ENCODE measurements at regions of chr4 and their contacts with region 1.

Region 1: GRCh38 chr4:6716018-6716911 is at the start of gene BLOC1S4:
- DNase-seq: peak; percentile 72 to 87
- H3K4me3 ChIP-seq: peak within 1 kb of the TSS; percentile 94
- H3K27ac ChIP-seq: peak within 1 kb of the TSS; percentile 51
- H3K4me1 ChIP-seq: peaks cover 11% of the 10 kb centered on the region
- H3K27me3 ChIP-seq: no peaks in the 10 kb centered on the region
- CTCF ChIP-seq: no peak
- total RNA-seq, gene BLOC1S4: 11.7 and 13.9 TPM in 2 replicates

Region 2: DNA sequence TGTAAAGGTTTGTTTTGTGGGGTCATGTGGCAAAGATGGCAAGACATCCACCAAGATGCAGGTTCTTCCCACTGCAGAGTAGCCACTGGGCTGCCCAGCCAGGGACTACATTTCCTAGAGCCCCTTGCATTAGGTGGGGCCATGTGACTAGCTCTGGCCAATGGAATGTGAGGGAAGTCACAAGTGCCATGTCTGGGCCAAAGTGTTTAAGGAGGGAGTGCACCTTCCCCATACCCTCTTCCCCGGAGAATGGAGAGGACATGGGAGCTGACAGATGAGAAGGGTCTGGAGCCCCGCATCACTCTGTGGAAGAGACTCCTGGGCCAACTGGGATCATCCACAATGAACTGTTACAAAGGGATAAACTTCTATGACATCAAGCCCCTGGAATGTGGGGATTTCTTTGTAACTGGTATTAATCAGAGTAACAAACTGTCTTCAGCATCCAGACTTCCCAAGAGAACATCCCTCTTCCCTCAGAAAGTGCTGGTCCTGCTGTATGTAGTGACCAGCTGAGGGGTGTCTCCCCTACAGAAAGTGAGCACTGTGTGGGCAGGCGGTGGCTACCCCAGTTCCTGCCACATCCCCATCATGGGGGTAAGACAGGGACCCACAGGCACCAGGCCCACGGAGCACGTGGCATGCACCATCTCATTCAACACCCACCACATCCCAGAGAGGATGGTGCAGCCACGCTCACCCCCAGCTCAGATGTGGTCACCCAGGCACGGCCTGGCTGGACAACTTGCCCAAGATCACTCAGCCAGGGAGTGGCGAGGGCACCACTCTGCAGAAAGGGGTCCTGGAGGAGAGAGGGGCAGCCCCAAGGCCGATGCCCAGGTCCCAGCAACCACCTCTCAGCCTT is 254.7 kb before region 1 on chr4:
- CTCF ChIA-PET with region 1: no interaction called
- POLR2A ChIA-PET with region 1: no interaction called
- intact Hi-C with region 1: no loop called
- DNase-seq: no peak
- H3K4me3 ChIP-seq: no peak overlapping the region
- H3K27ac ChIP-seq: no peak overlapping the region
- H3K4me1 ChIP-seq: no peaks in the 10 kb centered on the region
- H3K27me3 ChIP-seq: no peaks in the 10 kb centered on the region
- CTCF ChIP-seq: no peak

Region 3: DNA sequence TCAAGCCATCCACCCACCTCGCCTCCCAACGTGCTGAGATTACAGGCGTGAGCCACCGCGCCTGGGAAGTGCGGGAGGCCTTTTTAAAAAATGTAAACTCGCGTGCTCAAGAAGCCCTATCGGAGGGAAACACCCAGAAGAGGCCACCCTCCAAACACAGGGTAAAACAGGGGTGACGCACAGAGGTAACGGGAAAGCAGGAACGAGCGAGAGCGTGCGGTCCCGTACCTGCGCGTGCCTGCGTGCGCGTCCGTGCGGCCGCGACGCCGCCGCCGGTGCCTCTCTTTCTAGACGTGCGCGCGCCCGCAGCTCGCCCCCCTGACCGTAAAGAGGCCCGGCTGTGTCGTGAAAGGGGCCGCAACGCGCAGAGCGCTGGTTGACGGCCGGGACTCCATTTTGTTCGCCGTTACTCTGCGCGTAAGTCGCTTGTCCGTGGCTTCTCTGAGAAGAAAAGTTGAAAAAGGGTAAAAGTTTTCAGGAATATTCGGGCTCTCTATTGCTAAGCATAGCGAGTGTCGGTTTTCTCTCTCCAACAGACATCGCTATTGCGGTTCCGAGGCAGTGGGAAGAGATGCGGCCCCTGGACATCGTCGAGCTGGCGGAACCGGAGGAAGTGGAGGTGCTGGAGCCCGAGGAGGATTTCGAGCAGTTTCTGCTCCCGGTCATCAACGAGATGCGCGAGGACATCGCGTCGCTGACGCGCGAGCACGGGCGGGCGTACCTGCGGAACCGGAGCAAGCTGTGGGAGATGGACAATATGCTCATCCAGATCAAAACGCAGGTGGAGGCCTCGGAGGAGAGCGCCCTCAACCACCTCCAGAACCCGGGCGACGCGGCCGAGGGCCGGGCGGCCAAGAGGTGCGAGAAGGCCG is 75.7 kb before region 1 on chr4 and contains the start of gene MRFAP1:
- CTCF ChIA-PET with region 1: no interaction called
- POLR2A ChIA-PET with region 1: no interaction called
- intact Hi-C with region 1: loop called (anchors 5 kb)
- DNase-seq: peak; percentile 83 to 91
- H3K4me3 ChIP-seq: peak within 1 kb of the TSS; percentile 78
- H3K27ac ChIP-seq: peak within 1 kb of the TSS; percentile 80
- H3K4me1 ChIP-seq: peaks cover 12% of the 10 kb centered on the region
- H3K27me3 ChIP-seq: no peaks in the 10 kb centered on the region
- CTCF ChIP-seq: no peak
- total RNA-seq, gene MRFAP1: 278 and 291 TPM in 2 replicates

Region 4: GRCh38 chr4:6658597-6659075 is 57.6 kb before region 1 on chr4:
- CTCF ChIA-PET with region 1: no interaction called
- POLR2A ChIA-PET with region 1: no interaction called
- intact Hi-C with region 1: no loop called
- DNase-seq: no peak
- H3K4me3 ChIP-seq: no peak overlapping the region
- H3K27ac ChIP-seq: no peak overlapping the region
- H3K4me1 ChIP-seq: no peaks in the 10 kb centered on the region
- H3K27me3 ChIP-seq: no peaks in the 10 kb centered on the region
- CTCF ChIP-seq: no peak

Region 5: GRCh38 chr4:6695660-6696630 is 20.3 kb before region 1 on chr4:
- CTCF ChIA-PET with region 1: no interaction called
- POLR2A ChIA-PET with region 1: interaction called, 10 read pairs
- intact Hi-C with region 1: no loop called
- DNase-seq: peak; percentile 84 to 95
- H3K4me3 ChIP-seq: peak overlapping the region; percentile 86
- H3K27ac ChIP-seq: peak overlapping the region; percentile 100
- H3K4me1 ChIP-seq: peaks cover 37% of the 10 kb centered on the region
- H3K27me3 ChIP-seq: no peaks in the 10 kb centered on the region
- CTCF ChIP-seq: no peak; the same call in 1 of the 2 replicates

Region 6: GRCh38 chr4:6749341-6750171 is 33.3 kb after region 1 on chr4:
- CTCF ChIA-PET with region 1: no interaction called
- POLR2A ChIA-PET with region 1: no interaction called
- intact Hi-C with region 1: no loop called
- DNase-seq: peak; percentile 91 to 93
- H3K4me3 ChIP-seq: peak overlapping the region; percentile 35; the same call in 1 of the 2 replicates
- H3K27ac ChIP-seq: peak overlapping the region; percentile 96
- H3K4me1 ChIP-seq: peaks cover 78% of the 10 kb centered on the region
- H3K27me3 ChIP-seq: no peaks in the 10 kb centered on the region
- CTCF ChIP-seq: no peak

Region 7: DNA sequence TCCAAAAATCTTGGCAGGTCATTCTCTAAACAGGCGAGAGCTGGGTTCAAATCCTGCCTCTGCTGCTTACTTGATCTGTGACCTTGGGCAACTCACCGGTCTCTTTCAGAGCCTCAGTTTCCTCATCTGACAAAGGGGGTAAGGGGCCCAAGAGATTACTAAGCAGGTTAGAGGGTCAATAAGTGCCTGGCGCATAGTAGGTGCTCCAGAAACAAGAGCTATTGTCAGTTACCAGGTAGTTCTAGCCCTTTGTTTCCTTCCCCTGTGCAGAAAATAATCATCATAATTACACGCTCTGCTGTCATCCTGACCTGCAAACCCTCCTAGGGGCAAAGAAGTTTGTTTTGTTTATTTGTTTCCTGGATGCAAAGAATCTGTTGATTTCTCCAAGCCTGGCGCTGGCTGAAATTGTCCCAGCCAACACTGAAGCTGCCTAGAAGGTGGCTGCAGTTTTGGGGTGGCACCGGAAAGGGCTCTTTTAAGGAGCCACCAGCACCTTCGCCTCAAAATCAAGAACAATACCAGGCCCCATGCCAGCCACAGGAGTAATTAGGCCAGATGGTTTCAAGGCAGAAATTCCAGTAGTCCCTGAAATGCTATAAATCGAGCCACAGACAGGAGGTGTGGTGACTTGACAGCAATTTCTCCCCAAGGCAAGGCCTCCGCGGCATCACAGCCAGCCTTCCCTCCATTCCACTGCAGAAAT is 56.1 kb after region 1 on chr4:
- CTCF ChIA-PET with region 1: no interaction called
- POLR2A ChIA-PET with region 1: no interaction called
- intact Hi-C with region 1: loop called (anchors 2 kb)
- DNase-seq: peak; percentile 77 to 89
- H3K4me3 ChIP-seq: no peak overlapping the region
- H3K27ac ChIP-seq: peak overlapping the region; percentile 81
- H3K4me1 ChIP-seq: peaks cover 71% of the 10 kb centered on the region
- H3K27me3 ChIP-seq: no peaks in the 10 kb centered on the region
- CTCF ChIP-seq: no peak

Region 8: DNA sequence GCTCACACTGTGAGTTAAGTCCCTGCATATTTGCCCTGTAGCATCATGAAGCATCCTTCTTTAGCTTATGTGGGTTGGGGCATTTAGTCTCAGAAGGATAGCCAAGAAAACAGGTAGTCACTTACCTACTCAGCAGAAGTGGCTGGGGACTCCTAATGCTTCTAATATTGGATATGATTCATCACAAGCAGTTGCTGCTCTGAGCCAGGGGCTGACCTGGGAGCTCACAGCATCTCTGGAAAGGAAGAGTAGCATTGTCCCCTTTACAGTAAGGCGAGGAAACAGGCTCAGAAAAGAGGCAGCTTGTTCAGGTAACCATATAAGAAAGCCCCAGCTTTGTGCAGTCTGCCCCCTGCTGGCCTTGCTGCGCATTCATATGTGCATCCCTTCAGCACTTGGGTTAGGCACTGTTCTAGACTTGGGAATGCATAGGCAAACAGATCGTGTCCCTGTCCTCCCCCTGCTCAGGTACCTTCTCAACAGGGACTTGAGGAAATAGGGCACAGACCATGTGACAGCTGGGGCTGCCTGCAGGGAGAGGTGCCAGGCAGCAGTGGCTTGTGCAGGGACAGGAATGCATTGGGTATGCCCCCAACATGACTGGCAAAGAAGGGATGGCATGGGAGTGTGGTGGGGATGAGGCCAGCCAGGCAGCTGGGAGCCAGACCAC is 157.7 kb after region 1 on chr4:
- CTCF ChIA-PET with region 1: interaction called, 10 read pairs
- POLR2A ChIA-PET with region 1: no interaction called
- intact Hi-C with region 1: loop called (anchors 1 kb)
- DNase-seq: peak in 1 of 2 experiments; percentile 58
- H3K4me3 ChIP-seq: no peak overlapping the region
- H3K27ac ChIP-seq: no peak overlapping the region
- H3K4me1 ChIP-seq: no peaks in the 10 kb centered on the region
- H3K27me3 ChIP-seq: no peaks in the 10 kb centered on the region
- CTCF ChIP-seq: peak; percentile 79

Region 9: DNA sequence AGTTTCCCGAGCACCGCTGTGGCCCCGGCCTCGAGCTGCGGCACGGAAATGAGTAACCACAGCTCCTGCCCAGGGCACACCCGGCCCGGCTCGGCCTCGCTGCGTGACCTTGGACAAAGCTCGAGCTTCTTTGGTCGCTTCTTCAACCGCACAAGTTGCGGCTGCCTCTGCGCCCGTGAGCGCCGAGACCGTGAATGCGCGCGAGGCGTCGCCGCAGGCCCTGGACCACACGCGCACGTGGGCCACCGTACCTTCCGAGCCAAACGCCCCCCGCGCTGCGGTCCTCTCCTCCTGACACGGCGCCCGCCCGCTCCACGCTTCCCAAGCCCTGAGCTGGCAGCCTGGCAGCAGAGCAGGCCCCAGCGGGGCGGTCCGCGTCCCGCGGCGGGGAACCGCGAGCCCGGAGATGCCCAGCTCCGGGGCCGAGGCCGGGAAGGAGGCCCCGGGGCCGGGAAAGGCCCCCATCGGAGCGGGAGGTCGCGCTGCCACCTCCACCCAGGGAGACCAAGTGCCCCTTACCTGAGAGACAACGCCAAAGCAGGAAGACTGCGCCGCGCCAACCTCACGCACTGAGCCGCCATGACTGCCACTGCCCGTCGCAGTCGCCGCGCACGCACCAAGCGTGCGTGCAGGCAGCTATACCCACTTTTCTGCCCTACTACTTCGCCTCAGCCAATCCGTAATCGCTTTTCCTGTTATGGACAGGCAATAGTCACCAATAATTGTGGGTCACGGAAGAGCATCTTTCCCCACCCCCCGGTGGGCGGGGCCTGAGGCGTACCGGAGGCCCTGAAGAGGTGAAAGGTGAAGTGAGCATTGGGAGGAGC is 351.4 kb after region 1 on chr4 and contains the start of gene GRPEL1:
- CTCF ChIA-PET with region 1: interaction called, 3 read pairs
- POLR2A ChIA-PET with region 1: interaction called, 3 read pairs
- intact Hi-C with region 1: loop called (anchors 2 kb)
- DNase-seq: peak; percentile 96 to 99
- H3K4me3 ChIP-seq: peak within 1 kb of the TSS; percentile 90
- H3K27ac ChIP-seq: peak within 1 kb of the TSS; percentile 63
- H3K4me1 ChIP-seq: peaks cover 13% of the 10 kb centered on the region
- H3K27me3 ChIP-seq: no peaks in the 10 kb centered on the region
- CTCF ChIP-seq: no peak
- total RNA-seq, gene GRPEL1: 49.3 and 49.9 TPM in 2 replicates